Endothelial cell of umbilical vein (primary cell): ENCODE measurements at regions of chr4 and their contacts with region 1.

Region 1: GRCh38 chr4:10403633-10404445 is 53.4 kb downstream of the ZNF518B start:
- DNase-seq: peak; percentile 60
- H3K4me3 ChIP-seq: no peak overlapping the region
- H3K27ac ChIP-seq: no peak overlapping the region
- H3K4me1 ChIP-seq: no peaks in the 10 kb centered on the region
- H3K27me3 ChIP-seq: peaks cover 2 to 5% of the 10 kb centered on the region in 2 experiments
- CTCF ChIP-seq: peak; percentile 19 to 22
- POLR2A ChIP-seq: no peak

Region 2: GRCh38 chr4:10018818-10019461 is 384.9 kb before region 1 on chr4:
- CTCF ChIA-PET with region 1: no interaction called
- POLR2A ChIA-PET with region 1: no interaction called
- dilution Hi-C with region 1: no loop called
- intact Hi-C with region 1: loop called (anchors 2 kb)
- DNase-seq: peak; percentile 95
- H3K4me3 ChIP-seq: peak overlapping the region in 2 of 3 experiments; percentile 25 to 27
- H3K27ac ChIP-seq: peak overlapping the region; percentile 50
- H3K4me1 ChIP-seq: peaks cover 6% of the 10 kb centered on the region
- H3K27me3 ChIP-seq: no peaks in the 10 kb centered on the region
- CTCF ChIP-seq: peak; percentile 100
- POLR2A ChIP-seq: peak; percentile 75

Region 3: DNA sequence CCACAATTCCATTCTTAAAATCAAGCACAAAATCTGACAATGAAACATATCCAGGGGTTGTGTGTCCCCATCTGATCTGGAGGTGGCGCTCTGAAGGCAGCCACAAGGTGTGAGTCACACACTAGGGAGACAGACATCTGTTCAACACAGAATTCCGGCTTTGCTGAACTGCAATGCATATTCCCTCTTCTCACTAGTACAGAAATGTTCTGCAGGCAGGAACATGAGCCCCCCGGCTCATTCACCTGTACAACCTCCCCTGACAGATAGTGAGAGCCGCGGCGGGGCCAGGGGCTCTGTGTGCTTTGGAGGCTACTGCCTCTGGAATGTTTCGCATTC is 329.1 kb before region 1 on chr4:
- CTCF ChIA-PET with region 1: no interaction called
- POLR2A ChIA-PET with region 1: no interaction called
- dilution Hi-C with region 1: no loop called
- intact Hi-C with region 1: loop called (anchors 5 kb)
- DNase-seq: peak; percentile 53
- H3K4me3 ChIP-seq: no peak overlapping the region
- H3K27ac ChIP-seq: no peak overlapping the region
- H3K4me1 ChIP-seq: peaks cover 23% of the 10 kb centered on the region
- H3K27me3 ChIP-seq: no peaks in the 10 kb centered on the region
- CTCF ChIP-seq: peak; percentile 53 to 61
- POLR2A ChIP-seq: peak; percentile 20

Region 4: DNA sequence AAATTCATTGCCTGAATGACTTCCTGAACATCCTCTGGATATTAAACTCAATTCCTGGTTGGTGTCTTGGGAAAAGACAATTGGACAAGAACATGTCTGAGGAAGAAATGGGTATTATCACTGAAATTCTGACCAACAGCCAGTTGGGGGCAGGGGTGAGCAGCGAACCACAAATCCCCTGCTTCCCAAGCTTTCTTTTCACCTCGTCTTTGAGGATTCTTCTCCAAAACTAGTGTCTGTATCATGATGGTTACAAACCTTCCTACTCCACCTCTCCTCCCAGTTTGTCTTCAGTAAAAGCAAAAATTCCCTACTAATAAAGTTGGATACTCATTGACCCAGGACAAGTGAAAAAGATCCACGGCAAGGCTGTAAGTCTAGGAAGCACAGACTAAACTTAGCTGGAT is 239.0 kb before region 1 on chr4:
- CTCF ChIA-PET with region 1: interaction called, 123 read pairs
- POLR2A ChIA-PET with region 1: no interaction called
- dilution Hi-C with region 1: no loop called
- intact Hi-C with region 1: loop called (anchors 1 kb)
- DNase-seq: peak; percentile 73
- H3K4me3 ChIP-seq: no peak overlapping the region
- H3K27ac ChIP-seq: no peak overlapping the region
- H3K4me1 ChIP-seq: no peaks in the 10 kb centered on the region
- H3K27me3 ChIP-seq: no peaks in the 10 kb centered on the region
- CTCF ChIP-seq: peak; percentile 65 to 74
- POLR2A ChIP-seq: no peak

Region 5: DNA sequence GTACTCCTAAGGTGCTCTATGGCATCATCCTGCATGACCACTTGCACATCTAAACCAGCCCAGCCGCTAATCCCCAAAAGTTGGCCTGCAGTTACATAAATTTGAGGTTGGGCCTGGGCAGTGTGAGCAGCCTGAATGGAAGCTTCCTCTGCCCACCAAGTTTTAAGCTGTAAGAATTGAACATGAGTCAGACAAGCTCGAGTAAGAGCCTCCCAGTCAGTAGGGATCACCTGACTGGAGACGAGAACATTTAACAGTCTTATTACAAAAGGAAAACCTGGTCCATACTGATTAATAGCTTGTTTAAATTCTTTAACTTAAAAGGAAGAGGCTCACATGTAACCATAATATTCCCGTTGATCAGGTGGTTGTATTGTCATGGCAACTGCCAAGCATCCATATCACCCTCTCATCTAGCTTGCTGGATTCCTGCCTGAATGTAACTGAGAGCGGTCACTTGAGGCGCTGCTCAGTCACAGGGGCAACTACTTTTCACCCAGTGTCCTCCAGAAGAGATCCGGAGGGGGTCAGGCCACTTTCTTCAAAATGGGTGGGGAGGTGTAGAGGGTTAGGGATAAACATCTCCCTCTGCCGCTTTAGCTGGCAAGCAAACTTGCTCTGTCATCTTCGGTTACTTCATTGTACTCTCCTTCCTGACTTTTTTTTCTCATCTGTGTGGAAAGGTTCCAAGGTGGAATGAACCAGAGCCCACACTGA is 230.6 kb before region 1 on chr4:
- CTCF ChIA-PET with region 1: interaction called, 12 read pairs
- POLR2A ChIA-PET with region 1: no interaction called
- dilution Hi-C with region 1: no loop called
- intact Hi-C with region 1: no loop called
- DNase-seq: peak; percentile 70
- H3K4me3 ChIP-seq: no peak overlapping the region
- H3K27ac ChIP-seq: peak overlapping the region; percentile 6
- H3K4me1 ChIP-seq: peaks cover 15% of the 10 kb centered on the region
- H3K27me3 ChIP-seq: no peaks in the 10 kb centered on the region
- CTCF ChIP-seq: peak in 1 of 2 donors; percentile 28
- POLR2A ChIP-seq: no peak

Region 6: DNA sequence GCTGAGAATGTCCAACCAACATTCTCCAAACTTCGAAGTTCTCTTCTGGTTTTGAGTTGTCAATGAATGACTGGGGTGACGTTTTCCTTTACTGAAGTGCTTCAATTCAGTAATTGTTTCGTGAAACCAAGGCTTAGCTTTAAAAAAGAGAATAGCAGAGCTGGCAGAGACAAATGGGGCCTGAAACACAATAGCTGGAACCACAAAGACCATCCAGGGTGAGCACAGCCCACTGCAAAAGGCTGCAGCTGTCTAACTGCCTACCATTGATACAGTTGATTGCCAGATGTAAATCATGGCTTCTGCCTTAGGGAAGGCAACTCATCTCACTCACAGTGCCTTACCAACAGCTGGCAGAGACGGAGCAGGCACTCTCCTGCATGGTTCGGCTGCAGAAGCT is 132.1 kb after region 1 on chr4:
- CTCF ChIA-PET with region 1: interaction called, 7 read pairs
- POLR2A ChIA-PET with region 1: no interaction called
- dilution Hi-C with region 1: no loop called
- intact Hi-C with region 1: loop called (anchors 2 kb)
- DNase-seq: no peak
- H3K4me3 ChIP-seq: no peak overlapping the region
- H3K27ac ChIP-seq: no peak overlapping the region
- H3K4me1 ChIP-seq: peaks cover 3% of the 10 kb centered on the region
- H3K27me3 ChIP-seq: peaks cover 0 to 2% of the 10 kb centered on the region in 2 experiments
- CTCF ChIP-seq: no peak
- POLR2A ChIP-seq: no peak